ENCODE measurements at regions of chr13 and their contacts with region 1.

Region 1: DNA sequence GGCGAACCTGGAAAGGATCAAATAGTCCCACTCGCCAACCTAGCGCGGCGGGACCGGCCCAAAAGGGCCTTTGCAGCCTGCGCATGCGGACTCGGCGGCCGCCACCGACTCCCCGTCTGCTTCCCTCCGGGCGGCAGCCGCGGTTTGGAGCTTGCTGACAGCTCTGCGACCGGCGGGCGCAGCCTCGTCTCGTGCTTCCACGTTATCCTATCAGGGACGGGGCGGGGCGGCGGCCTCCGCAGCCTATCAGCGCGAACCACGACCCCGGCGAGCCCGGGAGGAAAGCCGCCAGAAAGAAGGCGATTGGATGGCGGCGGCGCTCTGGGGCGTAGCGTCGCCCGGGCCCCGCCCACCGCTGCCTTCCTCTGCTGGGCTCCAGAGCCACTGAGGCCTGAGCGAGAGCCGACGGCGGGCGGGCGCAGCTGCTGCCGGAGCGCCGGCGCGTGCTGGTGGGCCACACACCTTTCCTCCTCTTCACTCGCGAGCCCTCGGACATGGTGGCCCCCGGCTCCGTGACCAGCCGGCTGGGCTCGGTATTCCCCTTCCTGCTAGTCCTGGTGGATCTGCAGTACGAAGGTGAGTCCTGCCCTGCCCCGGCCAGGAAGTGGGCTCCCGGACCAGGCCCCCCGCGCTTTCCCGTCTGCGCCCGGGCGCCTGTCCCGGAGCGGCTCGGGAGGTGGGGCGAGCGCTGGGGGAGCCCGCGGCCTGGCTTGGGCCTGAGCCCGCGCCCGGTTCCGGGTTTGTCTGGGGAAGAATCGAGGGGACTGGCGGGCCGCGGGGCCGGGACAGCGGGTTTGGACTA is at the start of gene DNAJC3:
- DNase-seq: peak; percentile 99
- H3K4me3 ChIP-seq: peak within 1 kb of the TSS; percentile 80 to 96 (median 90)
- H3K27ac ChIP-seq: peak within 1 kb of the TSS; percentile 96 to 98 (median 98)
- H3K4me1 ChIP-seq: peaks cover 24 to 52% (median 50%) of the 10 kb centered on the region in 4 donors
- H3K27me3 ChIP-seq: no peaks in the 10 kb centered on the region
- CTCF ChIP-seq: no peak
- EP300 ChIP-seq: no peak
- POLR2A ChIP-seq: peak; percentile 85
- total RNA-seq, gene DNAJC3: 43.8 to 55.1 (median 48.9) TPM

Region 2: GRCh38 chr13:95463531-95463930 is 213.4 kb before region 1 on chr13:
- intact Hi-C with region 1: no loop called
- DNase-seq: no peak
- H3K4me3 ChIP-seq: no peak overlapping the region
- H3K27ac ChIP-seq: no peak overlapping the region
- H3K4me1 ChIP-seq: no peaks in the 10 kb centered on the region
- H3K27me3 ChIP-seq: no peaks in the 10 kb centered on the region
- CTCF ChIP-seq: no peak
- EP300 ChIP-seq: no peak
- POLR2A ChIP-seq: no peak

Region 3: GRCh38 chr13:95644601-95645052 is 32.3 kb before region 1 on chr13 and contains the start of gene DZIP1:
- intact Hi-C with region 1: loop called (anchors 5 kb)
- DNase-seq: no peak
- H3K4me3 ChIP-seq: peak within 1 kb of the TSS; percentile 70 to 74 (median 72)
- H3K27ac ChIP-seq: peak within 1 kb of the TSS; percentile 67 to 82 (median 79)
- H3K4me1 ChIP-seq: peaks cover 24 to 44% (median 43%) of the 10 kb centered on the region in 4 donors
- H3K27me3 ChIP-seq: peaks cover 0 to 26% (median 0%) of the 10 kb centered on the region in 4 donors
- CTCF ChIP-seq: no peak
- EP300 ChIP-seq: no peak
- POLR2A ChIP-seq: no peak
- total RNA-seq, gene DZIP1: 14.5 to 31.3 (median 22.2) TPM

Region 4: DNA sequence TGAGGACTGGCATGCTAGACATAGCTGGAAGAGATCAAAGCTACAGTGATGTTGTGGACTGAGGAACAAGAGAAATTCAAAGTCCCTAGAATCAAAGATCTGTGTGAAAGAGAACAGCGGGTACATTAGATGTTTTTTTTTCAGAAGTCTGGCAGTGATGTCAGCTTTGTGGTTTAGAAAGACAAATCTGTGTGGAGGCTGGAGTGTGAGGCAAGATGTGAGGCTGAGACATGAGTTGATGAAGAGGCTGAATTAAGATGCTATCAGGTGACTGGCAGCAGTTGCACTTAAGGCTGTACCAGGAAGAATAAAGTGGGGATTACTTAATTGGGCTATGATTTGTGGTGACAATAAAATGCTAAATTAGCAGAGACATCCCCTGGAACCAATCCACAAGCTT is 46.5 kb after region 1 on chr13:
- intact Hi-C with region 1: loop called (anchors 10 kb)
- DNase-seq: no peak
- H3K4me3 ChIP-seq: no peak overlapping the region
- H3K27ac ChIP-seq: no peak overlapping the region
- H3K4me1 ChIP-seq: peaks cover 0 to 37% (median 26%) of the 10 kb centered on the region in 4 donors
- H3K27me3 ChIP-seq: no peaks in the 10 kb centered on the region
- CTCF ChIP-seq: no peak
- EP300 ChIP-seq: no peak
- POLR2A ChIP-seq: no peak

Region 5: DNA sequence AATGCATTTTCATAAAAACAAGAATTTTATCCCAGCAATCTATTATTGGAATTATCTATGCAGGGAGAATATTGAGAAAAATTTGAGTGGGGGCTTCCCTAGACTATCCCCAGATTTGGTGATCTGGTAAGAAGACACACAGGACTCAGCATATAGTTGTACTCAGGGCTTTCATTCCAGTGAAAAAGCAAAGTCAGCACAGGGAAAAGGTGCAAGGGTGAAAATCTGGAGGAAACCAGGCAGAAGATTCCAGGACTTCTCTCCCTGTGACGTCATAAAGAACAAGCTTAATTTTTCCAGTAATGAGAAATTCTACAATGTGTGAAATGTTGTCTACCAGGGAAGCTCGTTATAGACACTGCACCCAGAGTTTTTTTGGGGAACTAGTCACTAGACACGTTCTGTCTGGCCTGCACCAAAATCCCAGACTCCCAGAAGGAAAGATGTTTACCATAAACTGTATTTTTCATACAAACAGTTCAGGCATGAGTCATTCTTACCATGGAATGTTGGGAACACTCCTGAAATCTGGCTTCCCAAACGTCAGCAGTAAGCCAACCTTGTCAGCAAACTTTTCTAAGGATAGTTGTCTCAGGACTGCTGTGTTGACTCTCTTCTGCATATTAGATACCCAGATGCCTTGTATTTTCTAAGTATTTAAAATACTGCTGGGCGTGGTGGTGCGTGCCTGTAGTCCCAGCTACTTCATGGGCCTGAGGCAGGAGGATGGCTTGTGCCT is 107.4 kb after region 1 on chr13:
- intact Hi-C with region 1: loop called (anchors 10 kb)
- DNase-seq: no peak
- H3K4me3 ChIP-seq: no peak overlapping the region
- H3K27ac ChIP-seq: peak overlapping the region in 1 of 4 donors; percentile 4
- H3K4me1 ChIP-seq: peaks cover 4 to 16% (median 13%) of the 10 kb centered on the region in 4 donors
- H3K27me3 ChIP-seq: no peaks in the 10 kb centered on the region
- CTCF ChIP-seq: no peak
- EP300 ChIP-seq: no peak
- POLR2A ChIP-seq: no peak

Measured in esophagus muscularis mucosa (tissue), 4 donors.